Dendritic cell treated with granulocyte-macrophage colony-stimulating factor and Interleukin-4, amounts not matched to agents 40 ng/mL and 50 ng/mL, for 4 days (primary cell): ENCODE measurements at regions of chr5 and their contacts with region 1.

Region 1: GRCh38 chr5:120096413-120096812 is 367.7 kb upstream of the PRR16 start:
- H3K4me3 Mint-ChIP-seq: peak overlapping the region; percentile 30
- H3K27ac Mint-ChIP-seq: peak overlapping the region; percentile 42
- H3K4me1 Mint-ChIP-seq: peaks cover 51% of the 10 kb centered on the region
- H3K27me3 Mint-ChIP-seq: no peaks in the 10 kb centered on the region

Region 2: GRCh38 chr5:120463991-120464626 is 367.7 kb after region 1 on chr5 and contains the start of gene PRR16:
- intact Hi-C with region 1: loop called (anchors 10 kb)
- H3K4me3 Mint-ChIP-seq: peak within 1 kb of the TSS; percentile 77
- H3K27ac Mint-ChIP-seq: peak within 1 kb of the TSS; percentile 47
- H3K4me1 Mint-ChIP-seq: peaks cover 36% of the 10 kb centered on the region
- H3K27me3 Mint-ChIP-seq: peaks cover 22% of the 10 kb centered on the region